Ovary (tissue), 10 donors: ENCODE measurements at regions of chr16 and their contacts with region 1.

Region 1: DNA sequence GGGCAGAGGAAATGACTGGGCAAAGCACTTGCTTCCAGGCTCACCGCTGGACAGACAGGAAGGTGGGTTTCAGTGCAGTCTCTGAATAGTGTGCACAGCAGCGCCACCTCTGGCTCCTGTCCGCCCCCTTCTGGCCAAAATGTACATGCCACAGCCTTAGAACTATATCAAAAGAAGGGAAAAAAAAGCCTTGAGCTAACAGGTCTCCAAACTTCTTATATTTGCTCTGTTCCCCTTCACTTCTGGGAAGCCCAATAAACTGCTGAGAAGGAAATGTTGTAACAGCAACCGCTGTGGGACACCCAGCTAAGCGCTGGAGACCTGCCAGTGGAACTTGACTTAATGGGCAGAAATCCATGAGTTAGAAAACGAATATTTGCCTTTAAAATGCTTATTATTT is 17.5 kb downstream of the COG7 start:
- DNase-seq: peak in 3 of 5 donors; percentile 35 to 49 (median 37)
- H3K4me3 ChIP-seq: no peak overlapping the region
- H3K27ac ChIP-seq: no peak overlapping the region
- H3K4me1 ChIP-seq: no peaks in the 10 kb centered on the region
- H3K27me3 ChIP-seq: no peaks in the 10 kb centered on the region
- CTCF ChIP-seq: peak in 2 of 3 donors; percentile 31 to 32
- EP300 ChIP-seq: no peak
- POLR2A ChIP-seq: no peak

Region 2: GRCh38 chr16:23072084-23072599 is 363.4 kb before region 1 on chr16:
- intact Hi-C with region 1: loop called in 1 of 4 experiments (anchors 10 kb)
- DNase-seq: peak; percentile 73 to 92 (median 82)
- H3K4me3 ChIP-seq: no peak overlapping the region
- H3K27ac ChIP-seq: no peak overlapping the region
- H3K4me1 ChIP-seq: peaks cover 5% of the 10 kb centered on the region
- H3K27me3 ChIP-seq: no peaks in the 10 kb centered on the region
- CTCF ChIP-seq: no peak
- EP300 ChIP-seq: no peak
- POLR2A ChIP-seq: no peak

Region 3: DNA sequence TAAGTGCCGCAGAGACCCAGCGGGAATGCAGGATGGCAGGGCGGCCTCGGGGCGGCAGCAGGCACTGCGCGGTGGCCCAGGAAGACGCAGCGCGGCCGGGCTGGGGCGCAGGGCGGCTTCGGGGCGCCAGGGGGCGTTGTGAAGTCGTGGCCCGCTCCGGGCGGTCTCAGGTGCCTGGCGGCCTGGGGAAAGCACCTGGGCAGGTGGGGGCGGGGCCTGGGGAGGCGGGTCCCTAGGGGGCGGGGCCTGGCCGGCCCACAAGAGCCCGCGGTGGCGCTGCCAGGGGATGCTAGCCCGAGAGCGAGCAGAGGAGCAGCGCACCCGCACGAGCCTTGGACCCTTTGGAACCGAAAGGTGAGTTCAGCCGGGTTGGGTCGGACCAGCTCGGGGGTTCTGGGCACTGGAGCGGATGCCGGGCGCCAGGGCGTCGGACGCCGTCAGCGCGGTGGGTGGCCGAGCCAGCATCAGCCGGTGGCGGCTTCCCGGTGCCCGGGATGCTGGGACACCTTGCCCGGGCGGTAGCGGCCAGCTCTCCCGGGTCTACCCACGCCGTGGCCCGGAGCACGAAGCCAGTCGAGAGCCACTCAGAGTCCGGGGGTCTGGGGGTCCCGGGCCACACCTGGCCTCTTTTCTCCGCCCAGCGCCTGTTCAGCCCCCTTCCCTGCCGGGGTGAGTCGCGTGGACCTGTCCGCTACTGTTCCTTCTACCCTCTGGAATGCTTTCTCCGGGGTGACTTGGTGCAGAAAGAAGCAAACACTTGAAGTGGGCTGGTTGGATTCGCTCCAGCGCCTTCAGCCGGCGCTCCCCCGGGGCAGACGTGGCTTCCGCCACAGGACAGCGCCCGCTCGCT is 252.8 kb before region 1 on chr16 and contains the start of gene SCNN1G:
- intact Hi-C with region 1: loop called in 2 of 4 experiments (anchors 5 kb)
- DNase-seq: peak; percentile 35 to 75 (median 50)
- H3K4me3 ChIP-seq: peak within 1 kb of the TSS; percentile 30
- H3K27ac ChIP-seq: no peak within 1 kb of the TSS
- H3K4me1 ChIP-seq: peaks cover 10% of the 10 kb centered on the region
- H3K27me3 ChIP-seq: no peaks in the 10 kb centered on the region
- CTCF ChIP-seq: peak; percentile 25 to 48 (median 41)
- EP300 ChIP-seq: no peak
- POLR2A ChIP-seq: no peak
- total RNA-seq, gene SCNN1G: 0.05 to 2.6 (median 1.0) TPM in 4 of 7 donors, not detected in the others